Astrocyte of the cerebellum (primary cell): ENCODE measurements at regions of chr12 and their contacts with region 1.

Region 1: DNA sequence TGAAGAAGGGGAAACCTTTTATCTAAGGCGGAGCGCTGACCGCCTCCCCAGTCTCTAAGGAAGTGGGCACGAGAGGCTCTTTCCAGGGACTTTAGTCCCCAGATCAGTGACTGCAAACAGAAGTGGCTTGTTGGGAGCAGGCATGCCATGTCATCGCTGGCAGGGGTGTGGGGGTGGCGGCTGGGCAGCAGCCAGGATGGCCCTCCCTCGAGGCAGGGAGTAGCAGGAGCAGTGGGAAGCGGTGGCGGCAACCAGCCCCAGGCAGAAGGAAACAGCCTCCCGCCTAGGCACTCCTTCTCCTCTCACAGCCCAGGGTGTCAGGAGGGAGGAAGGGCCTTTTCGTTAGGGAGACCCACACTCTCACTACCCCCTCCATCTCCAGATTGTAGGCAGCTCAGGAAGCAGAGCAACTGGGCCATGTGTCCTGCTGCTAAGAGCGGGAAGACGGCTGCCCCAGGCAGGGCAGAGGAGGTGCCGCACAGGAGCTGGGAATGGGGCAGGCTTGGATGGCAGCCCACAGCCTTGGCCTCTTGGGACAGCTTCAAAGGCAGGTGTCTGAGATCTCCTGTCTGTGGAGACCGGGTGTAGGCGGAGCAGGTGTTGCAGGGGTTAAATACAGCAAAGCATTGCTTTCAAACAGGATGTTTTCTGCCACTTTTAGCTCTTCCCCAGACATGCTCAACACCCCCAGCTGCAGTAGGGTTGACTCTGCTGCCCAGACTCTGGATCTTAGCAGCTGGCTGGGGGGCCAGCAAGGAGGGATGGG is 21.8 kb downstream of the VDR start:
- DNase-seq: no peak
- H3K4me3 ChIP-seq: no peak overlapping the region
- CTCF ChIP-seq: no peak

Region 2: DNA sequence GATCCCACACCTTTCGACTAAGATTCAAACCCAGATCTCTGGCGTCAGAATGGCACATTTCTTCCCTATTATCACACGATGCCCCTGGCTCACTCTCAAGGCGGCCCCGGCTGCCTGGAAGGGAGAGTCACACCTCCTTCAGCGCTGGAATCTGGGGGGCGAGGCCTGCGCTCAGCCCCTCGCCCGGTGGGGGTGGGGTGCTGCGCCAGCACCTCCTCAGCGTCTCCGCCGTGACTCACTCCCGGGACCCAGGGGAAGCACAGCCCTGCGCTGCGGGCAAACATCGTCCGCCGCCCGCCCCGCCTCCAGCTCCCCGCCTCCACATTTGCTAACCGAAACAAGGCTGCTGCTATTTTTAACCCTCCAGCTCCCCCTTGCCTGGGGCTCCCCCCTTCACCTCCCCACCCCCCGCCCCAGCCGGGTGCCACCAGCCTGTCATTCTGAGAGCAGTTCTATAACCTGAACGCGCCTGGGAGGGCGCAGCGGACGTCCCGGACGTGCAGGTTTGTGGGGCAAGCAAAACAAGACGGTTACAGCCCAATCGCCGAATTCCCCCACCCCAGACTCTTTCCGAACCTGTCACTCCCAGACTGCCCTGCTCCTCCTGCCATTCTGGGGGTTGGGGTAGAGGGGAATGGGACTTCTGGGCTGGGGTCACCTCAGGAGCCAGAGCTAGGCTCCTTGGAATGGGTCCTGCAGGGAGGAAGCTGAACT is 70.0 kb before region 1 on chr12:
- in situ Hi-C with region 1: loop called (anchors 5 kb)
- DNase-seq: peak; percentile 57
- H3K4me3 ChIP-seq: peak overlapping the region; percentile 27
- CTCF ChIP-seq: no peak

Region 3: DNA sequence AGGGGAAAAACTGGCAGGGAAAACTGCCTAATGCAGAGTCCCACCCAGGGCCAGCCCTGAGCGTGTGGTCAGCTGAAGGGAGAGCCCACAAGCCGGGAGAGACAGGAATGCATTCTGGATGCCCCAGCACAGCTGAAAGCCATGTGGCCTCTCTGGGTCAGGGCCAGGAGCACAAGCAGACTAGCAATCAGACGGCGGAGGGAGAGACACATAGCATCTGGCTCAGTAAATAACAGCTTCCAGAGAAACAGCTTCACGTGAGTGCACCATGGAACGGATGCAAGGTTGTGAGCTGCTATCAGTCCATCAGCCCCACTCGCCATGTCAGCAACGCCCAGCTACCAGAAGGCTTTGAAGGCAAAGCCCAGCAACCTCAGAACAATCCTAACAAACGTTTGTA is 52.2 kb after region 1 on chr12:
- in situ Hi-C with region 1: loop called (anchors 10 kb)
- DNase-seq: peak; percentile 38
- H3K4me3 ChIP-seq: no peak overlapping the region
- CTCF ChIP-seq: no peak

Region 4: GRCh38 chr12:47963340-47964040 is 80.5 kb after region 1 on chr12 and contains the start of gene TMEM106C:
- in situ Hi-C with region 1: no loop called
- DNase-seq: peak; percentile 70
- H3K4me3 ChIP-seq: peak within 1 kb of the TSS; percentile 96
- CTCF ChIP-seq: peak; percentile 99